ENCODE measurements at regions of chr22 and their contacts with region 1.

Region 1: DNA sequence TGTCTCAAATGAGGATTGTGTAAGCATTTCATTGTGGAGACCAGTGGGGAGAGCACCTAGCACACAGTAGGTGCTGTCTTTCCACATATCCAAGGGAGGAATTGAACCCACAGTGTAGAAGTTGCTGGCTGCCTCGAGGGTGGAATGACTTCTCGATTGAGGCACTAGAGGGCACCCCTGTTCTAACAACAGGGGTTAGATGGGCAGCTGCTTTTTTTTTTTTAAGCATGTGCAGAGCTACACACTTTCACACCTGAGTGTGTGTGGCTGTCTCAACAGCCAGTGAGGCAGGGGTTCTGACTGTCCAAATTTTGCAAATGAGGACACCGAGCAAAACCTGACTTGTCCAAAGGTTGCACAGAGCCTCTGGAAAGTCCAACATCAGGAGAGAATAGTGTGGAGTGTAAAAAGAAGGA is 118.2 kb upstream of the CRYBB3 start:
- DNase-seq: peak; percentile 59
- H3K4me3 ChIP-seq: no peak overlapping the region
- H3K27ac ChIP-seq: no peak overlapping the region
- H3K4me1 ChIP-seq: peaks cover 15% of the 10 kb centered on the region
- H3K27me3 ChIP-seq: no peaks in the 10 kb centered on the region
- CTCF ChIP-seq: peak; percentile 55 to 73
- POLR2A ChIP-seq: no peak

Region 2: DNA sequence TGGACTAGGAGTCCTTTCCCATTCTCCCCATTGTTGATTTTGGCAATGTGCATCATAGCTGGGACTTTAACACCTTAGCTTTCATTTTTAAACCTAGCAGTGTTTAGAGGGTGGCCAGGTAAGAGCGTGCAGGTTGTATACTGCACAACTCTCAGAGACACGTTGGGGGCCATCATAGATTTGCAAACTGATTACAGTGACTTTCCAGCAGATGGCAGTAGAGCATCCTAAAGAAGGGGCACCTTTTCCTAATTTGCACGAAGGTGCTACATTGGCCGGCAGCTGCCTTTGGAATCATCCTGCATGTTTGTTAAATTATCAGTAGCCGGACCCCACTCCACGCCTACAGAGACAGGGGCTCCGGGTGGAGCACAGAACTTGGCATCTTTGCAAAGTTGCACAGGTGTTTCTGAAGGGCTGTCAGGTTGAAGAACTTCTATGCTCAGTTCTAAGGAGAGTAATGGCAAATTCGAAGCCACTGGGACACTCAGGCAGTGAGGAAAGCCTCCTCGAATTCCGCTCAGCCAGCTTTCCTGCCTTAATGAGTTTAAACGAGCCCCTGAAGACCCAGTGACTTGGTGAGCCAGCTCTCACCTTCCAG is 142.6 kb before region 1 on chr22:
- CTCF ChIA-PET with region 1: no interaction called
- POLR2A ChIA-PET with region 1: no interaction called
- dilution Hi-C with region 1: no loop called
- intact Hi-C with region 1: no loop called
- DNase-seq: peak; percentile 43
- H3K4me3 ChIP-seq: no peak overlapping the region
- H3K27ac ChIP-seq: no peak overlapping the region
- H3K4me1 ChIP-seq: no peaks in the 10 kb centered on the region
- H3K27me3 ChIP-seq: peaks cover 14% of the 10 kb centered on the region in 2 experiments
- CTCF ChIP-seq: peak; percentile 61 to 67
- POLR2A ChIP-seq: no peak

Region 3: DNA sequence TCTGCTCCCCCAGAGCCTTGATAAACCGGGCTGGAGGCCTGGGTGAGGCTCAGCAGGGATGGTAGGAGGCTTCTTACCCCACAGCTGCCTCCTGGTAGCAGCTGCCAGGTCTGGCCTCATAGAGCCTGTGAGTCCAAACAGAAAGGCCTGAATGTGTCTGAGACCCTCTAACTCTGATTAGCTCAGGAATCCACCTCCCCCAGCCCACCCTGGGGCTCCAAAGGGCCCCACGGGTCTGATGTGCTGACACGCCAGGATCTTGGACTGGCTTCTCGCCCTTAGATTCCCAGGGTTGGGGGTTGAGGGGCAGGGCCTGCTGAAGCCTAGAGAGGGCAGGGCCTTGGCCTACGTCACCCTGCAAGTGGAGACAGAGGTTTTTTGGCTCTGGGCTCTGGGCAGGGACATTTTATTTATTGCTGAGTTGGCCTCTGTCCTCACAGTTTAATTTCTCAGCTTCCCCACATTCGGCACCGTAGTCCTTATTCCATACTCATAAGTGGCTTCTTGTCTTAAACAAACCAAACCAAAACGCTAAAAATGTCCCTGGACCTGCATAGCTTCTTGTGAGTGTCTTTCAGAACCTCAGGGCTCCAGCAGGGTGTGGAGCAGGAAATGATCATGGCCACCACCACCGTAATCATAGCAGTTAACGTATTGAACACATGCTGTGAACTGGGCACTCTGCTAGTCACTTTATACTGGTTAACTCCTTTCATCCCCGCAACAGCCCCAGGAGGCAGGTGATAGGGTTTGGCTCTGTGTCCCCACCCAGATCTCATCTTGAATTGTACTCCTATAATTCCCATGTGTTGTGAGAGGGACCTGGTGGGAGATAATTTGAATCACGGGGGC is 103.8 kb before region 1 on chr22:
- CTCF ChIA-PET with region 1: no interaction called
- POLR2A ChIA-PET with region 1: no interaction called
- dilution Hi-C with region 1: no loop called
- intact Hi-C with region 1: no loop called
- DNase-seq: no peak
- H3K4me3 ChIP-seq: no peak overlapping the region
- H3K27ac ChIP-seq: peak overlapping the region; percentile 15
- H3K4me1 ChIP-seq: peaks cover 23% of the 10 kb centered on the region
- H3K27me3 ChIP-seq: no peaks in the 10 kb centered on the region
- CTCF ChIP-seq: no peak
- POLR2A ChIP-seq: no peak

Region 4: DNA sequence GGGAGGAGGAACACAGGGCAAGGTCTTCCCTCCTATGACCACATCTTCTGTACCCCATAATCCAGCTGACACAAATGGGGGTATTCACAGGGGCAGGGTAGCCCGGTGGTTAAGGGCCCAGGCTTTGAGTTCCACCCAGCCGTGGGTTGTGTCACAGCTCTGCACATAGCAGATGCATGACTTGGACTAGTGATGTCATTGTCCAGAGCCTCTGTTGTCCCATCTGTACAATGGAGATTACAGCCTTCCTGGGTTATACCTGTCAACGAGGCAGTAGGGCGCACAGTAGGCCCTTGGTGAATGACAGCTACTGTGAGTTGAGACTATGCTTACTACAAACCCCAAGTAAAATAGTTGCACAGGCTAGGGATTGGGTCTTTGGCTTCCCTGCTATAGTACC is 19.0 kb after region 1 on chr22:
- CTCF ChIA-PET with region 1: no interaction called
- POLR2A ChIA-PET with region 1: no interaction called
- dilution Hi-C with region 1: no loop called
- intact Hi-C with region 1: no loop called
- DNase-seq: no peak
- H3K4me3 ChIP-seq: no peak overlapping the region
- H3K27ac ChIP-seq: no peak overlapping the region
- H3K4me1 ChIP-seq: no peaks in the 10 kb centered on the region
- H3K27me3 ChIP-seq: no peaks in the 10 kb centered on the region
- CTCF ChIP-seq: no peak
- POLR2A ChIP-seq: no peak

Region 5: GRCh38 chr22:25120093-25120561 is 38.7 kb after region 1 on chr22:
- CTCF ChIA-PET with region 1: interaction called, 5 read pairs
- POLR2A ChIA-PET with region 1: no interaction called
- dilution Hi-C with region 1: no loop called
- intact Hi-C with region 1: loop called (anchors 1 kb)
- DNase-seq: peak; percentile 64
- H3K4me3 ChIP-seq: peak overlapping the region in 1 of 3 experiments; percentile 25
- H3K27ac ChIP-seq: peak overlapping the region; percentile 100
- H3K4me1 ChIP-seq: peaks cover 38% of the 10 kb centered on the region
- H3K27me3 ChIP-seq: no peaks in the 10 kb centered on the region
- CTCF ChIP-seq: no peak
- POLR2A ChIP-seq: no peak

Region 6: GRCh38 chr22:25148149-25148691 is 66.8 kb after region 1 on chr22:
- CTCF ChIA-PET with region 1: interaction called, 3 read pairs
- POLR2A ChIA-PET with region 1: no interaction called
- dilution Hi-C with region 1: no loop called
- intact Hi-C with region 1: loop called (anchors 1 kb)
- DNase-seq: peak; percentile 77
- H3K4me3 ChIP-seq: no peak overlapping the region
- H3K27ac ChIP-seq: no peak overlapping the region
- H3K4me1 ChIP-seq: peaks cover 18% of the 10 kb centered on the region
- H3K27me3 ChIP-seq: no peaks in the 10 kb centered on the region
- CTCF ChIP-seq: peak in 1 of 2 donors; percentile 38
- POLR2A ChIP-seq: no peak

Region 7: GRCh38 chr22:25172153-25172552 is 90.7 kb after region 1 on chr22:
- CTCF ChIA-PET with region 1: interaction called, 24 read pairs
- POLR2A ChIA-PET with region 1: no interaction called
- dilution Hi-C with region 1: no loop called
- intact Hi-C with region 1: loop called (anchors 1 kb)
- DNase-seq: peak; percentile 52
- H3K4me3 ChIP-seq: no peak overlapping the region
- H3K27ac ChIP-seq: no peak overlapping the region
- H3K4me1 ChIP-seq: no peaks in the 10 kb centered on the region
- H3K27me3 ChIP-seq: no peaks in the 10 kb centered on the region
- CTCF ChIP-seq: peak; percentile 20 to 66
- POLR2A ChIP-seq: no peak

Region 8: DNA sequence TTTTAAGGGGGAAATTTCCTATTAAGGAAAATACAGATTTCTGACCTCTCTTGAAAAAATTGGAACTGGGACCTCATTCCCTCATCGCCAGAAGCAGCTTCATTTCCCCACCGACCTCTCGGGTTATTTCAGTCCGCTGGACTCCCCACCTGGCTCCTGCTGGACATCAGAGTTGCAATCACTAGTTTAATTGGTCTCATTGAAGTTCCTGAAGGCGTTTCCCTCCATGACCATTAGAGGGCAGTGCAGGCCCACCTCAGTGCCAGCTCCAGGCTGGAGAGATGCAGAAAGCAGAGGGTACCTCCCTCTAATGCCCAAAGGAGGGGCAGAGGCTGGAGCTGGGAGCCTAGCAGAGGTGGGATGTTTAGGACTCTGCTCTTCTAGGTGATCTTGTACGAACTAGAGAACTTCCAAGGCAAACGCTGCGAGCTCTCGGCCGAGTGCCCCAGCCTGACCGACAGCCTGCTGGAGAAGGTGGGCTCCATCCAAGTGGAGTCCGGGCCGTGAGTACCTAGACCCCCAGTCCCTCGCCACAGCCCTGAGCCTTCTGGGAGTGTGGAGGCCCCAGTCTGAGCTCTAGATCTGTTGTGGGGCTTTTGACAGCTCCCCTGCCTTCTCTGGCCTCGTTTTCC is 121.0 kb after region 1 on chr22:
- CTCF ChIA-PET with region 1: interaction called, 31 read pairs
- POLR2A ChIA-PET with region 1: no interaction called
- dilution Hi-C with region 1: no loop called
- intact Hi-C with region 1: loop called (anchors 1 kb)
- DNase-seq: peak; percentile 69
- H3K4me3 ChIP-seq: no peak overlapping the region
- H3K27ac ChIP-seq: no peak overlapping the region
- H3K4me1 ChIP-seq: no peaks in the 10 kb centered on the region
- H3K27me3 ChIP-seq: no peaks in the 10 kb centered on the region
- CTCF ChIP-seq: peak; percentile 82 to 87
- POLR2A ChIP-seq: no peak

Region 9: DNA sequence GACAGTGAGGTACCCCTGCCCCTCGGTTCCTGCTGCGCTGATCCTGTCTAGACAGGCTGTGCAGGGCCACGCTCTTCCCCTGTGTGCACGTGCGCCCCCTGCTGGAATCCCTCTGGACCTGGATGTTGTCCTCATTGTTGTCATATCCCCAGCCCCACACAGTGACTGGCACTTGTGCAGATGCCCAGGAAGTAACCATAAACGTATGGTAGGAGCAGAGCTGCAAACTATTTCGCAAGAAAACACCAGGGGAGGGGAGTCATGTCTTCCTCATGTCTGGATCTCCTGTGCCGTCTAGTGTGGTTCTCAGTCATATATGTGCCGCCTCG is 252.7 kb after region 1 on chr22:
- CTCF ChIA-PET with region 1: interaction called, 8 read pairs
- POLR2A ChIA-PET with region 1: no interaction called
- dilution Hi-C with region 1: no loop called
- intact Hi-C with region 1: loop called (anchors 1 kb)
- DNase-seq: peak; percentile 44
- H3K4me3 ChIP-seq: no peak overlapping the region
- H3K27ac ChIP-seq: no peak overlapping the region
- H3K4me1 ChIP-seq: no peaks in the 10 kb centered on the region
- H3K27me3 ChIP-seq: peaks cover 0 to 2% of the 10 kb centered on the region in 2 experiments
- CTCF ChIP-seq: peak; percentile 68 to 75
- POLR2A ChIP-seq: no peak